ENCODE measurements at regions of chr2 and their contacts with region 1.

Region 1: GRCh38 chr2:9984217-9984739 is 32.8 kb downstream of the GRHL1 start:
- DNase-seq: peak in 6 of 9 experiments; percentile 7 to 77 (median 21)
- ATAC-seq: peak; percentile 87
- H3K4me3 ChIP-seq: no peak overlapping the region
- H3K4me3 Mint-ChIP-seq: no peak overlapping the region
- H3K27ac ChIP-seq: no peak overlapping the region
- H3K27ac Mint-ChIP-seq: no peak overlapping the region
- H3K4me1 ChIP-seq: peaks cover 9% of the 10 kb centered on the region
- H3K4me1 Mint-ChIP-seq: peaks cover 11% of the 10 kb centered on the region
- H3K27me3 ChIP-seq: no peaks in the 10 kb centered on the region
- H3K27me3 Mint-ChIP-seq: peaks cover 4% of the 10 kb centered on the region
- CTCF ChIP-seq: peak; percentile 84

Region 2: DNA sequence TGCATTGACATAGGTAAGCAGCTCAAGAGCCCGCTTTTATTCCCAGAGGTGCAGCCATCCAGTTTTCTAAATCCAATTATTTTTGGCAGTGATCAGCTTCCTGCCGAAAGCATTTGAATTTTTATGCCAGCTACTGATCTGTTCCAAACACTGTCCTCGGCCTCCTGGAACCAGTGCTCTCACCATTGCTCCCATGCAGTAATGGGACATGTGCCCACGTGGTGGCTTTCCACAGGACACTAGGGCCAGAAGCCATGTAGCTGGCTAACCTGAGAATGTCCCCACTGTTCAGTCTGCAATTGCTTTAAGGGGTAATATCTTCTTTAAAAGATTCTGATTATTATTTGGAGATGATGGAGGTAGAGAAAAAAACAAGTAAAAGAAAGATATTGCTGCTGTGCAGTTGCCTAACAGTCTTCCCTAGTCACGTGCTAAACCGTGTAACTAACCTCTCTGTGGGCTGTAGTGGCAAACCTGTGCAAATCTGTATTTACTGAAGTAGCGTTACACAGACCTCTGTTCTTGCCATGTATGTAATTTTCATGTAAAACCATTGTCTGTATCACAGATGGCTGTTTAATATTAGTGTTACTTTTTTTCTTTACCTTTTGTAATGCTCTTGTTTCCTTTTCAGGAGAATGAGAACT is 19.8 kb before region 1 on chr2:
- CTCF ChIA-PET with region 1: interaction called, 41 read pairs
- POLR2A ChIA-PET with region 1: no interaction called
- intact Hi-C with region 1: no loop called
- DNase-seq: no peak
- ATAC-seq: no peak
- H3K4me3 ChIP-seq: no peak overlapping the region
- H3K4me3 Mint-ChIP-seq: no peak overlapping the region
- H3K27ac ChIP-seq: no peak overlapping the region
- H3K27ac Mint-ChIP-seq: no peak overlapping the region
- H3K4me1 ChIP-seq: no peaks in the 10 kb centered on the region
- H3K4me1 Mint-ChIP-seq: peaks cover 2% of the 10 kb centered on the region
- H3K27me3 ChIP-seq: no peaks in the 10 kb centered on the region
- H3K27me3 Mint-ChIP-seq: no peaks in the 10 kb centered on the region
- CTCF ChIP-seq: no peak

Region 3: GRCh38 chr2:9972621-9973479 is 11.4 kb before region 1 on chr2:
- CTCF ChIA-PET with region 1: interaction called, 41 read pairs
- POLR2A ChIA-PET with region 1: interaction called, 3 read pairs
- intact Hi-C with region 1: no loop called
- DNase-seq: no peak
- ATAC-seq: no peak
- H3K4me3 ChIP-seq: no peak overlapping the region
- H3K4me3 Mint-ChIP-seq: no peak overlapping the region
- H3K27ac ChIP-seq: no peak overlapping the region
- H3K27ac Mint-ChIP-seq: no peak overlapping the region
- H3K4me1 ChIP-seq: no peaks in the 10 kb centered on the region
- H3K4me1 Mint-ChIP-seq: no peaks in the 10 kb centered on the region
- H3K27me3 ChIP-seq: no peaks in the 10 kb centered on the region
- H3K27me3 Mint-ChIP-seq: peaks cover 2% of the 10 kb centered on the region
- CTCF ChIP-seq: no peak

Region 4: GRCh38 chr2:10006236-10007161 is 22.2 kb after region 1 on chr2:
- CTCF ChIA-PET with region 1: interaction called, 10 read pairs
- POLR2A ChIA-PET with region 1: no interaction called
- intact Hi-C with region 1: no loop called
- DNase-seq: no peak
- ATAC-seq: no peak
- H3K4me3 ChIP-seq: no peak overlapping the region
- H3K4me3 Mint-ChIP-seq: no peak overlapping the region
- H3K27ac ChIP-seq: no peak overlapping the region
- H3K27ac Mint-ChIP-seq: no peak overlapping the region
- H3K4me1 ChIP-seq: no peaks in the 10 kb centered on the region
- H3K4me1 Mint-ChIP-seq: no peaks in the 10 kb centered on the region
- H3K27me3 ChIP-seq: no peaks in the 10 kb centered on the region
- H3K27me3 Mint-ChIP-seq: peaks cover 13% of the 10 kb centered on the region
- CTCF ChIP-seq: no peak

Region 5: GRCh38 chr2:10028988-10029874 is 45.0 kb after region 1 on chr2:
- CTCF ChIA-PET with region 1: interaction called, 31 read pairs
- POLR2A ChIA-PET with region 1: interaction called, 5 read pairs
- intact Hi-C with region 1: no loop called
- DNase-seq: peak in 8 of 9 experiments; percentile 33 to 83 (median 50)
- ATAC-seq: peak; percentile 94
- H3K4me3 ChIP-seq: peak overlapping the region; percentile 29 to 42
- H3K4me3 Mint-ChIP-seq: peak overlapping the region; percentile 69
- H3K27ac ChIP-seq: peak overlapping the region; percentile 30 to 75
- H3K27ac Mint-ChIP-seq: peak overlapping the region; percentile 73
- H3K4me1 ChIP-seq: peaks cover 30% of the 10 kb centered on the region
- H3K4me1 Mint-ChIP-seq: peaks cover 21% of the 10 kb centered on the region
- H3K27me3 ChIP-seq: no peaks in the 10 kb centered on the region
- H3K27me3 Mint-ChIP-seq: no peaks in the 10 kb centered on the region
- CTCF ChIP-seq: no peak

Region 6: GRCh38 chr2:10036095-10036884 is 52.0 kb after region 1 on chr2:
- CTCF ChIA-PET with region 1: interaction called, 31 read pairs
- POLR2A ChIA-PET with region 1: interaction called, 7 read pairs
- intact Hi-C with region 1: no loop called
- DNase-seq: peak in 5 of 9 experiments; percentile 43 to 80 (median 56)
- ATAC-seq: peak; percentile 88
- H3K4me3 ChIP-seq: no peak overlapping the region
- H3K4me3 Mint-ChIP-seq: no peak overlapping the region
- H3K27ac ChIP-seq: no peak overlapping the region
- H3K27ac Mint-ChIP-seq: no peak overlapping the region
- H3K4me1 ChIP-seq: no peaks in the 10 kb centered on the region
- H3K4me1 Mint-ChIP-seq: peaks cover 8% of the 10 kb centered on the region
- H3K27me3 ChIP-seq: no peaks in the 10 kb centered on the region
- H3K27me3 Mint-ChIP-seq: no peaks in the 10 kb centered on the region
- CTCF ChIP-seq: no peak

Measured in CD8-positive, alpha-beta T cell (primary cell).